ENCODE measurements at regions of chr19 and their contacts with region 1.

Region 1: GRCh38 chr19:2648528-2648937 is 54.0 kb downstream of the GNG7 start:
- DNase-seq: peak; percentile 62 to 83
- ATAC-seq: peak; percentile 99

Region 2: GRCh38 chr19:2543463-2544442 is 104.8 kb before region 1 on chr19:
- intact Hi-C with region 1: no loop called
- DNase-seq: peak; percentile 88 to 94
- ATAC-seq: peak; percentile 91

Region 3: DNA sequence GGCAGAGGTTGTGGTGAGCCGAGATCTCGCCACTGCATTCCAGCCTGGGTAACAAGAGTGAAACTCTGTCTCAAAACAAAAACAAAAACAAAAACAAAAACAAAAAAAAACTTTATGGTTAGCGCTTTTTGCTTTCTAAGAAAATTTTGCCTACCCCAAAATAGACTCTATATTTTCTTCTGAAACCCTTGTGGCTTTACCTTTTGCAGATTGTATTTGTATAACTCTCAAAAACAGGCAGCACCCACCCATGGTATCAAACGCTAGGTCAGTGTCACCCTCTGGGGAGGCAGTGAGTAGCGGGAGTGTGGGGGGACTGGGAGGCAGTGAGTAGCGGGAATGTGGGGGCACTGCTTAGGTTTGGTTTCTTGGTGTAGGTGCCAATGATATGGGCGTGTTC is 98.8 kb after region 1 on chr19:
- intact Hi-C with region 1: loop called in 1 of 2 experiments (anchors 5 kb)
- DNase-seq: no peak
- ATAC-seq: no peak

Region 4: DNA sequence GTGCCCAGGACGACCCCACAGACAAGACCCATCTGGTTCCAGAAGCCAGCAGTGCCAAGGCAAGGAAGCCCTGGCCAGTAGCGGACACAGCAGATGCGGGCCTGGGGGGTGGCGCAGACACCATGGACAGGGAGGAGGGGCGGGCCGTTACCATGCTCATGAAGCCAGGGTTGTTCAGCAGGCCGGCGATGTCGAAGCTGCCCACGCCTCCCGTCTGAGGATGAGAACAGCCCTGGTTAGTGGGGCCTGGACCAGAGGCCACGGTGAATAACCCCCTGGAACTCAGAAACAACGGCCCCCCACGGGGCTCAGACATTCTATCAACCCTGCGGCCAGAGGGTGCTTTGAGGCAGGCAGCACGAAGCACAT is 112.8 kb after region 1 on chr19:
- intact Hi-C with region 1: loop called in 1 of 2 experiments (anchors 5 kb)
- DNase-seq: no peak
- ATAC-seq: no peak